ENCODE measurements at regions of chr10 and their contacts with region 1.

Region 1: DNA sequence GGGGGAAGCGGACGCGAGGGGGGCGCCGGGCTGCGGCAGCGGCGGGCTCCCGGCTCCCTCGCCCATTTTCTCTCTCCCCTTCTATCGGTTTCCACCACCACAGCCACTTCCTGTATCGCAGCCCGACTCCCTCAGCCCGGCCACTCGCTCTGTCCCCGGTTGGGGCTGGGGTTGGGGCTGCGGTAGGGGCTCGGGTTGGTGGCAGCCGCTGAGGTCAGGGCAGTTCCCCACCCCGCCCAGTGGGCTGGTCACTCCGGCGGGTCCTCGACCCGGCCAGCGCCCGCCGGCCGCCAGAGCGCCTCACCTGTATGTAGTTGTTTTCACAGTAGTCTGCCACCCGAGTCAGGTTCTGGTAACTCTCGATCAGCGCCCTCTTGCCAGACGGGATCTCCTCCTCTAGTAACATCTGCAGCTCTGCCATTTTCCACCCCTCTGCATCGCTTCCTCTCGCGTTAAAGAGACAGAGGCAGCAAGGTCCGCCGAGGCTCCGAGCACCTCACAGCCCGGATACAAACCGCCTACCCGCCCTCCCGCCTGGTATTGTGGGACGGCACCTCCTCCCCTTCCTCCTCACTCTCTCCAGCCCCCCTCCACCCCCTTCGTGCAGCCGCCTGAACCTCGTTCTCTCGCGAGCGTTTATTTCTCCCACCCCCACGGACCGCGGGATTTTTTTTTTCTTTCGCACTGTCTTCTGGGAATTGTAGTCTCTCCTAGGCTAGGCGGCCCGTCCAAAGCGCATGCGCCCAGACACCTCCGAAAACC is at the start of gene ABI1:
- DNase-seq: peak; percentile 87
- ATAC-seq: peak; percentile 90
- H3K4me3 Mint-ChIP-seq: peak within 1 kb of the TSS; percentile 98
- H3K27ac Mint-ChIP-seq: peak within 1 kb of the TSS; percentile 98
- H3K4me1 Mint-ChIP-seq: peaks cover 43% of the 10 kb centered on the region
- H3K27me3 Mint-ChIP-seq: peaks cover 3% of the 10 kb centered on the region
- CTCF ChIP-seq: no peak
- total RNA-seq, gene ABI1: 76.7 and 83.5 TPM in 2 replicates

Region 2: DNA sequence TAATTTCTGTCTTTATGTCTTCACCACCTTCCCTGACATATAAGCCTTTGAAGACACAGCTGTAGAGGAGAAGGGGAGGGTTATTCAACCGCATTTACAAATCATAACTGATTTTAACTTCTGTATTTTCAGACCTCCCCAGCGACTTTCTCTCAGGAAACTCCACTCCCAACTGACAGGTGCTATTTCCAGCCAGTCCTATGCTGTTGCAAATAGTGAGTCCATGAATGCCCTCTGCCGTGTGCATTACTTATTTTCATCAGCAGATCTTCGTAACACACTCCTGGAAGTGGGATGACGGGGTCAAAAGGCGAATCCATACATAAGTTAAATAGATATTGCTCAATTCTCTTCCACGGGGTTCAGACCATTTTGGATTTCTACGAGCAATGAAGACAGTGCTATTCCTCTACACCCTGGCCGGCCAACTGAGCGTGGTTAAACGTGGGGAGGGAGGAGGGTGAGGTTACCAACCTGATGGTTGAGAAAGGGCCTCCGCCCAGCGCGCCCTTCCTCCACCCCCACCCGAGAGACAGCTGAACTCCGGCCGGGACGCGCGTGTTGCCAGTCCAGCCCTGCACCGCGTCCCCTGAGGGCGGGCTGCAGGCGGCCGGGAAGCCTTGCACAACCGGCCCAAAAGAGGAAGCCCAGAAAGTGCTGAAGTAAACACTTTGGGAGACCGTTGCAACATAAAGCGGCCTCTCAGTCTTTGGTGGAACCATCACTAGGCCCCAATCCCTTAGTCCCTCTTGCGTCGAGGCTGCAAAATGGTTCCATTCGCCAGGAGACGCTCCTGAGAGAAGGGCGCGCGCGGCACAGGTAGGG is 422.8 kb before region 1 on chr10 and contains the start of gene APBB1IP:
- CTCF ChIA-PET with region 1: no interaction called
- POLR2A ChIA-PET with region 1: interaction called, 3 read pairs
- intact Hi-C with region 1: loop called (anchors 2 kb)
- DNase-seq: peak; percentile 65
- ATAC-seq: peak; percentile 77
- H3K4me3 Mint-ChIP-seq: peak within 1 kb of the TSS; percentile 93
- H3K27ac Mint-ChIP-seq: peak within 1 kb of the TSS; percentile 96
- H3K4me1 Mint-ChIP-seq: peaks cover 52% of the 10 kb centered on the region
- H3K27me3 Mint-ChIP-seq: no peaks in the 10 kb centered on the region
- CTCF ChIP-seq: no peak
- total RNA-seq, gene APBB1IP: 79.1 and 85.5 TPM in 2 replicates

Region 3: GRCh38 chr10:26725837-26726727 is 134.5 kb before region 1 on chr10:
- CTCF ChIA-PET with region 1: interaction called, 27 read pairs
- POLR2A ChIA-PET with region 1: interaction called, 7 read pairs
- intact Hi-C with region 1: loop called (anchors 1 kb)
- DNase-seq: no peak
- ATAC-seq: peak; percentile 80
- H3K4me3 Mint-ChIP-seq: no peak overlapping the region
- H3K27ac Mint-ChIP-seq: peak overlapping the region; percentile 4
- H3K4me1 Mint-ChIP-seq: peaks cover 17% of the 10 kb centered on the region
- H3K27me3 Mint-ChIP-seq: no peaks in the 10 kb centered on the region
- CTCF ChIP-seq: peak; percentile 45

Region 4: DNA sequence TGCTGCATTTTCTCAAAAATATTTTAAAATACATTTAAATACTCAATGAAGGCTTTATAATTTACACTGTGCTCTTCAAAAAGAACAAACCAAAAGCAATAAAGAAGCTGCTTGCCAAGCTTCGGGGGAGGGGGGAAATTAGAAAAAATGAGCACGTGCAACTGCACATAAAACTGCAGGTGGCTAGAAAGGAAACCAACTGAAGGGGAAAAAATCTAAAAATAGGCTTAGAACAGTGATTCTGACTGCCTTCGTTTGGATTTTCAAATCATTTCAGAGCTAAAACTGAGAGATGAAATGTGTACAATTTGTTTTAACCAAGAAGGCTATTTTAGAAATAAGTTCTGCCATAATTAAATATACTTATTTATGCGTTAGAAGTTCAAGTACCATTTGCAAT is 61.3 kb before region 1 on chr10:
- CTCF ChIA-PET with region 1: no interaction called
- POLR2A ChIA-PET with region 1: interaction called, 4 read pairs
- intact Hi-C with region 1: loop called (anchors 1 kb)
- DNase-seq: no peak
- ATAC-seq: peak; percentile 51
- H3K4me3 Mint-ChIP-seq: peak overlapping the region; percentile 65
- H3K27ac Mint-ChIP-seq: peak overlapping the region; percentile 80
- H3K4me1 Mint-ChIP-seq: peaks cover 89% of the 10 kb centered on the region
- H3K27me3 Mint-ChIP-seq: no peaks in the 10 kb centered on the region
- CTCF ChIP-seq: no peak

Region 5: DNA sequence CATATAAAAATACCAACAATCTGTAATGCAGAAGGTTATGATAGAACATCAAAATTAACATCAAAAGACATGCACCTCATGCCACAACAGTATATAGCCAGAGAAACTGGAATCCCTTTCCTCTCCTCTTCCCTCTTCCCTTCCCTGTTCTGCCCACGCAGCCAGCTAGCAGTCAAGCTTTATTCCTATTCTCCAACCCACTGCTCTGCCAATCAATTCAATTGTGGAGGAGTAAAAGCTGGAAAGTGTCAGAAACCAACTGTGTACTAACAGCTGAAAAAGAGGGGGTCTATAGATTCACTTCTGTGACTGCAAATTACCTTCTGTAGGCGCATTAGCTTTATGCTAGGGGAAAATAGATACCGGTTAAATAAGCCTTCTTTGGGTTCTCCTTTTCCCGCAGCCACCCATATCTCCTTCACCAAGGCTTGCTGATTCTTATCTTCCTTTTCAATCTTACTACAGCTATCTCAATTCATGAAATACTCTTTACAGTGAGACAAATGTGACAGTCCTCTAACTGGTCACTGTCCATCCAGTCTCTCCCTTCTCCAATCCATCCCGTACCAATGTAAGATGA is 16.1 kb before region 1 on chr10:
- CTCF ChIA-PET with region 1: interaction called, 5 read pairs
- POLR2A ChIA-PET with region 1: interaction called, 9 read pairs
- intact Hi-C with region 1: loop called (anchors 2 kb)
- DNase-seq: no peak
- ATAC-seq: no peak
- H3K4me3 Mint-ChIP-seq: no peak overlapping the region
- H3K27ac Mint-ChIP-seq: no peak overlapping the region
- H3K4me1 Mint-ChIP-seq: peaks cover 79% of the 10 kb centered on the region
- H3K27me3 Mint-ChIP-seq: no peaks in the 10 kb centered on the region
- CTCF ChIP-seq: no peak

Region 6: DNA sequence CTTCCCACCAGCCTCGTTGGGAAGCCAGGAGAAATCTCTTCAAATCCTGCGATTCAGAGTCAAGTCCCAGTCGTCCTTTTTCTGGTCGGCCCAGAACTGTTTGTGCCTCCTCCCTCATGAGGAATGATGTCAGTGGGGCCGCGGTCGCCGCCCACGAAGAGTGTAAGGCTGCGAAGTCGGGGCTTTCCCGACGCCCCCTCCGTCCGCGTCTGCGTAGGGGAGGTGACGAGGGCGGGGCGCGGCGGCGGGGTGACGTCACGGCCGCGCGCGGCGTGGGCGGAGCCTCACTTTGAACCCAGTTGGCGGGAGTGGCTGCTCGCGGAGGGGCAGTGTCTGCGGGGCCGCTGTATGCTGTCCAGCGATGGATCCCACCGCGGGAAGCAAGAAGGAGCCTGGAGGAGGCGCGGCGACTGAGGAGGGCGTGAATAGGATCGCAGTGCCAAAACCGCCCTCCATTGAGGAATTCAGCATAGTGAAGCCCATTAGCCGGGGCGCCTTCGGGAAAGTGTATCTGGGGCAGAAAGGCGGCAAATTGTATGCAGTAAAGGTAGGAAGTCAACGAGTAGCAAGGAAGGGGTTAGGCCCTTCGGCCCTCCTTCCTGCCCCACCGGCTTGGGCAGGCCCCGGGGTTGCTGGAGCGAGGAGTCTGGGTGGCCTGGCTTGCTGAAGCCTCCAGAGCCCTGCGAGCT is 294.6 kb after region 1 on chr10 and contains the start of gene MASTL:
- CTCF ChIA-PET with region 1: no interaction called
- POLR2A ChIA-PET with region 1: interaction called, 13 read pairs
- intact Hi-C with region 1: loop called (anchors 1 kb)
- DNase-seq: peak; percentile 97
- ATAC-seq: peak; percentile 84
- H3K4me3 Mint-ChIP-seq: peak within 1 kb of the TSS; percentile 100
- H3K27ac Mint-ChIP-seq: peak within 1 kb of the TSS; percentile 100
- H3K4me1 Mint-ChIP-seq: peaks cover 44% of the 10 kb centered on the region
- H3K27me3 Mint-ChIP-seq: no peaks in the 10 kb centered on the region
- CTCF ChIP-seq: no peak
- total RNA-seq, gene MASTL: 11.2 and 12.4 TPM in 2 replicates